Endothelial cell of umbilical vein (primary cell): ENCODE measurements at regions of chr15 and their contacts with region 1.

Region 1: DNA sequence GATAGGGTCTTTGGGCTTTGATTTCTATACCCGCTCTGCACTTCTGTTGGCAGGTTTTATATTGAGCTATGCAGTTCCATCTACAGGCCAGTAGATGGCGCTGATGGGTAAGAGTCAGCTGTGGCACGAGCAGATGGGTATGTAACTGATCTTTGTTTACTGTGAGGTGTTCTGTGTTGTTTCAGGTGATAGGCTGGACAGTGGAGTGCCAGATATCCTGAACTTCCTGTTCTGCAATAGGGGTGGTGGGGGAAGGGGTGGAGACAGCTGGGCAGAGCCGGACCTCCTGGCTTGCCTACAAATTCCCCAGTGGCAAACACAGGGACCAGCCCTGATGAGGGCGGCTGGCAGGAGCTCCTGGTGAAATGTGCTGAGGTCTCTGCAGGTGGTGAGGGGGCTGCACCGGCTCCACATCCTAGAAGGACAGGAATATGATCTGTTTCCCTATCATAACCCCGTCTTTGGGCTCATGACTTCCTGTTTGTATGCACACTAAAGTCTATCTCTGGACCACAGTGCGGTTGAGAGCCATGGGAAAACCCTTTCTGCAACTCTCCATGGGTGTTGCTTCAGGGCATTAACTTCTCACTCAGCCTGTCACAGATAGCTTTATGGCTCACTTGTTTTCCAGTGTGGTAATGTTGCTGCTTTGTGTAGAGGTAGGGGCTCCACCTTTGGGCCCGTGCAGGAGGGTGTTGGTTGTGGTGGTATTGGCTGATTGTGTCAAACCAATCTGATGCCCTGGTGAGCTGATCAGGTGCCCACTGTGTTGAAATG is 13.4 kb upstream of the FAM98B start:
- DNase-seq: peak; percentile 67
- H3K4me3 ChIP-seq: no peak overlapping the region
- H3K27ac ChIP-seq: no peak overlapping the region
- H3K4me1 ChIP-seq: no peaks in the 10 kb centered on the region
- H3K27me3 ChIP-seq: peaks cover 26 to 60% of the 10 kb centered on the region in 2 experiments
- CTCF ChIP-seq: peak; percentile 85 to 86
- POLR2A ChIP-seq: no peak

Region 2: GRCh38 chr15:38414357-38414756 is 26.2 kb before region 1 on chr15:
- CTCF ChIA-PET with region 1: interaction called, 24 read pairs
- POLR2A ChIA-PET with region 1: no interaction called
- dilution Hi-C with region 1: no loop called
- intact Hi-C with region 1: no loop called
- DNase-seq: peak; percentile 53
- H3K4me3 ChIP-seq: no peak overlapping the region
- H3K27ac ChIP-seq: no peak overlapping the region
- H3K4me1 ChIP-seq: no peaks in the 10 kb centered on the region
- H3K27me3 ChIP-seq: peaks cover 23 to 31% of the 10 kb centered on the region in 2 experiments
- CTCF ChIP-seq: peak; percentile 49 to 71
- POLR2A ChIP-seq: no peak

Region 3: GRCh38 chr15:38453971-38454695 is 13.6 kb after region 1 on chr15 and contains the start of gene FAM98B:
- CTCF ChIA-PET with region 1: interaction called, 26 read pairs
- POLR2A ChIA-PET with region 1: no interaction called
- dilution Hi-C with region 1: no loop called
- intact Hi-C with region 1: no loop called
- DNase-seq: peak; percentile 86
- H3K4me3 ChIP-seq: peak within 1 kb of the TSS; percentile 54 to 96 (median 83)
- H3K27ac ChIP-seq: peak within 1 kb of the TSS; percentile 75
- H3K4me1 ChIP-seq: peaks cover 9% of the 10 kb centered on the region
- H3K27me3 ChIP-seq: peaks cover 2 to 19% of the 10 kb centered on the region in 2 experiments
- CTCF ChIP-seq: no peak
- POLR2A ChIP-seq: peak; percentile 79
- total RNA-seq, gene FAM98B: 22.3 and 33.1 TPM in 2 replicates

Region 4: DNA sequence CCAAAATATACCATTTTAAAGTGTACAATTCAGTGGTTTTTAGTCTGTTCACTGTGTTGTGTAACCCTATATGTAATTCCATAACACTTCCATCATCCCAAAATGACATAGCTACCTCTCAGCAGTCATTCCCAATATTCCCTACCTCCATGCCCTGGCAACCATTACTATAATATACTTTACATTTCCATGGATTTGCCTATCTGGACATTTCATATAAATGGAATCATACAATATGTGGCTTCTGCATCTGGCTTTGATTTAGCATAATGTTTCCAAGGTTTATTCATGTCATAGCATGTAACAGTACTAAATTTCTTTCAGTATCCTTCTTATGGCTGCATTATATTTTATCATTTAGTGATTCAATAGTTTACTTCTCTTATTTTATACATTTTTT is 38.7 kb after region 1 on chr15:
- CTCF ChIA-PET with region 1: interaction called, 17 read pairs
- POLR2A ChIA-PET with region 1: no interaction called
- dilution Hi-C with region 1: no loop called
- intact Hi-C with region 1: no loop called
- DNase-seq: peak; percentile 5
- H3K4me3 ChIP-seq: no peak overlapping the region
- H3K27ac ChIP-seq: peak overlapping the region; percentile 60
- H3K4me1 ChIP-seq: peaks cover 19% of the 10 kb centered on the region
- H3K27me3 ChIP-seq: no peaks in the 10 kb centered on the region
- CTCF ChIP-seq: no peak
- POLR2A ChIP-seq: no peak

Region 5: GRCh38 chr15:38647683-38648082 is 207.1 kb after region 1 on chr15:
- CTCF ChIA-PET with region 1: interaction called, 24 read pairs
- POLR2A ChIA-PET with region 1: no interaction called
- dilution Hi-C with region 1: no loop called
- intact Hi-C with region 1: no loop called
- DNase-seq: peak; percentile 11
- H3K4me3 ChIP-seq: no peak overlapping the region
- H3K27ac ChIP-seq: no peak overlapping the region
- H3K4me1 ChIP-seq: no peaks in the 10 kb centered on the region
- H3K27me3 ChIP-seq: peaks cover 11 to 15% of the 10 kb centered on the region in 2 experiments
- CTCF ChIP-seq: peak in 1 of 2 donors; percentile 7
- POLR2A ChIP-seq: no peak

Region 6: GRCh38 chr15:38690689-38691332 is 250.3 kb after region 1 on chr15:
- CTCF ChIA-PET with region 1: interaction called, 152 read pairs
- POLR2A ChIA-PET with region 1: interaction called, 3 read pairs
- dilution Hi-C with region 1: no loop called
- intact Hi-C with region 1: loop called (anchors 2 kb)
- DNase-seq: peak; percentile 84
- H3K4me3 ChIP-seq: no peak overlapping the region
- H3K27ac ChIP-seq: no peak overlapping the region
- H3K4me1 ChIP-seq: no peaks in the 10 kb centered on the region
- H3K27me3 ChIP-seq: peaks cover 9 to 24% of the 10 kb centered on the region in 2 experiments
- CTCF ChIP-seq: peak; percentile 71 to 86
- POLR2A ChIP-seq: no peak